ENCODE measurements at regions of chr12 and their contacts with region 1.

Region 1: DNA sequence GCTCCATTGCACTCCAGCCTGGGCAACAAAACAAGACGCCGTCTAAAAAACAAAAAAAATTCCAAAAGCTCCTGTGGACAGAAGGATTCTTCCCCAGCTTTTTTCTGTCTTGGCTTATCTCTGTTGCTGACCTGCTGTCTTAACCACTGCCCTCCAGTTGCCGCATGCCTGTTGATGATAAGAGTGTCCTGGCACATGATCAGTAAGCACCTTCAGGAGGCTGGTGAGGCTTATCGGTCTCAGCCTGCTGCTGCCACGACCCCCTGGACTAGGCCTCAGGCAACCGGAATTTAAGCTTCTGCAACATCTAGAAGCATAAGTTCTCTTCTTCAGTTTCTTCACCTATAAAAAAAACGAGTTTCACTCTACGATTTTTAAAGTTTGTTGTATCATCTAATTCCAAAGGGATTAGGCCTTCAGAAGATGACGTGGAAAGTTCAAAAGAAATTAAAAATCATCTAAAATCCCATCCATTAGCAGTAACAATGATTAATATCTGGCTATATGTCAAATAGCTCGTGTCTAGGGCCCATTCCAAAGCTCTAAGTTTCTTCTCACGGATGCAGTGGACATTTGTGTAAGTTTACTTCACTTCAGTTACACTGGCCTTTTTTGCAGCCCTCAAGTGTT is 46.4 kb downstream of the RESF1 start:
- DNase-seq: no peak
- ATAC-seq: no peak
- H3K4me3 ChIP-seq: no peak overlapping the region
- H3K27ac ChIP-seq: no peak overlapping the region
- H3K4me1 ChIP-seq: peaks cover 0 to 9% (median 0%) of the 10 kb centered on the region in 12 donors
- H3K27me3 ChIP-seq: no peaks in the 10 kb centered on the region
- CTCF ChIP-seq: no peak
- POLR2A ChIP-seq: no peak

Region 2: DNA sequence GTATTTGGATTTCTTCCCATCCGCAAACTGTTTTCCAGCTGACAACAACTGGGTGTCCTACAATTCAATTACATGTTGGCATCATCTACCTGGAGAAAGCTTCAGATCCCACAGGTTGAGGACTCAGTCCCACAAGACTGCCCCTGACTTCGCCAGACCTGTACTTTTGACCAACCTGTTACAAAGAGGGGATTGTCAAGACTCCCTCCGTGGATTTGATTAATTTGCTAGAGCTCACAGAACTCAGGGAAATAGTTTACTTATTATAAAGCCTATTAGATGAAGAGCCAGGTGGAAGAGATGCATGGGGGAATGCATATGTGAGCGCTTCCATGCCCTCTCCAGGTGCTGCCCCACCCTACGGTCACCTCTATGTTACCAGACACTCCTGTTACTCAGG is 31.8 kb before region 1 on chr12:
- intact Hi-C with region 1: loop called in 1 of 10 experiments (anchors 2 kb)
- DNase-seq: no peak
- ATAC-seq: no peak
- H3K4me3 ChIP-seq: no peak overlapping the region
- H3K27ac ChIP-seq: no peak overlapping the region
- H3K4me1 ChIP-seq: peaks cover 0 to 18% (median 0%) of the 10 kb centered on the region in 12 donors
- H3K27me3 ChIP-seq: no peaks in the 10 kb centered on the region
- CTCF ChIP-seq: no peak
- POLR2A ChIP-seq: no peak

Region 3: GRCh38 chr12:32163596-32163995 is 158.0 kb after region 1 on chr12:
- intact Hi-C with region 1: no loop called
- DNase-seq: no peak
- ATAC-seq: no peak
- H3K4me3 ChIP-seq: no peak overlapping the region
- H3K27ac ChIP-seq: no peak overlapping the region
- H3K4me1 ChIP-seq: peaks cover 0 to 4% (median 0%) of the 10 kb centered on the region in 12 donors
- H3K27me3 ChIP-seq: no peaks in the 10 kb centered on the region
- CTCF ChIP-seq: no peak
- POLR2A ChIP-seq: no peak

Measured in heart left ventricle (tissue), 16 donors.